ENCODE measurements at regions of chr9 and their contacts with region 1.

Region 1: GRCh38 chr9:115591584-115591984 is 473.6 kb upstream of the TNC start:
- DNase-seq: peak; percentile 98
- H3K4me3 ChIP-seq: no peak overlapping the region
- CTCF ChIP-seq: peak; percentile 91

Region 2: DNA sequence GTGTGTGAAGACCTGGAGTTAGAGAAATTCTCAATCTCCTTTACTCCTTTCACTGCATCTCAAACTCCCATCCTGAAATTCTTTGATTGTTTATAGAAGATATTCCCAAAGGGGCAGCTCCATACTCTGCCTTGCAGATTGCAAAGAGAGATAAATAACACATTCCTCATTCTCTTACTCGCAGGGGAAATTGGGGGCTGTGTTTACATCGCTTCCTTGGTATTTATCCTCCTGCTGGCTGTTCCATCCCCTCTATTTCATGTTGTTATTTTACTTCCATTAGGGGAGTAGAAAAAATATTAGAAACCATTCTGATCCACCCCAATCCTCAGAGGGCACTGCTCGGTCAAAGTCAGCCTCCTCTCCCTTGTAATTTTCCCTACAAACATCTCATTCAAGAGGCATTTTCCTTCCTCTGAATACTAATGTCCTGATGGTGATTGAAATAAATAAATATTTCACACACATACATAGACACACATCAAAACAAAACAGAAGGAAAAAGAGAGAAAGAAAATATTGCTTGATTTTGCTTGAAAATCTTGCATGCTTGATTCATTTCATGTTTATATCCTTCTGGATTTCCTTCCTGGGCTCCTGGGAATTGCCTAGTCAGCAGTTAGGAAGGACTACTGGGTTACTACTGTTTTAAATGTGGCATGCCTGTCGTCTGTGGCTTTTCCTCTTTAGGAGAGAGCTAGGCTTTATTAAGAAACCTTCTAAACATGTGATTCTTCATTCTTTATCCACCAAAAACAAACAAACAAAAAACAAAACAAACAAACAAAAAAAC is 141.9 kb after region 1 on chr9:
- in situ Hi-C with region 1: no loop called
- DNase-seq: no peak
- H3K4me3 ChIP-seq: no peak overlapping the region
- CTCF ChIP-seq: no peak

Region 3: DNA sequence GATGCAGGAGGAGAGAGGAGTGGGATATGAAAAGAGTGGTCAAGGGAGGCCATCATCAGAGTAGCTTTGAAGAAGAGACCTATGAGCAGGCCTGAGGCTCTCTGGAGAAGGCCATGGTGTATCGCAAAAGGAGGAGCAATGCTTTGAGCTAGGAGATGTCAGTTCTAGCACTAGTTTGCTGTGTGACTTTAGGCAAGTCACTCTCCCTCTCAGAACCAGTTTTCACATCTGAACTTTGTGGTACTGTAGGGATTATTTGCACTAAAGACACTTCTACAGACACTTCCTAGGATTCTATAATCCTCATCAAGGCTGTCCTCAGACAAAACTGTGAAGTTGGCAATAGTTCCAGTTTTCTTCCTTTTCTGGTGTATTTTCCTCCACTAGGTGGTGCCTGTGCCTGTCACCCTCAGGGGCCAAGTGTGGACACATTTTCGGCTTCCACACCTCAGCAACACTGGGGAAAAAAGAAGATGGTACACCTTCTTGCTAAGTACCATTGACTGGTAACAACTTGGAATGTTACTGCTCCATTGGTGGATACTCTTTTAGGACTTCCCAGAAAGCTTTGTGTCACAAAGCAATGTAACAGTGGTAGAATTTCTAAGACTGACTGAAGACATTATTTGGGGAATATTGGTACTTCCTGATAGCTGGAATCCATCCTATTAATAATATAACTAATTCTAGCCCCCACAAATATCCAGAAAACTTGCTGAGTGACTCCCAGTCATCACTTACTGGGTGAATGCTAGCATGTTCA is 571.9 kb after region 1 on chr9:
- in situ Hi-C with region 1: loop called (anchors 10 kb)
- DNase-seq: no peak
- H3K4me3 ChIP-seq: no peak overlapping the region
- CTCF ChIP-seq: peak; percentile 58

Measured in astrocyte of the spinal cord (primary cell).